GM18951 (cell line): ENCODE measurements at regions of chr15 and their contacts with region 1.

Region 1: DNA sequence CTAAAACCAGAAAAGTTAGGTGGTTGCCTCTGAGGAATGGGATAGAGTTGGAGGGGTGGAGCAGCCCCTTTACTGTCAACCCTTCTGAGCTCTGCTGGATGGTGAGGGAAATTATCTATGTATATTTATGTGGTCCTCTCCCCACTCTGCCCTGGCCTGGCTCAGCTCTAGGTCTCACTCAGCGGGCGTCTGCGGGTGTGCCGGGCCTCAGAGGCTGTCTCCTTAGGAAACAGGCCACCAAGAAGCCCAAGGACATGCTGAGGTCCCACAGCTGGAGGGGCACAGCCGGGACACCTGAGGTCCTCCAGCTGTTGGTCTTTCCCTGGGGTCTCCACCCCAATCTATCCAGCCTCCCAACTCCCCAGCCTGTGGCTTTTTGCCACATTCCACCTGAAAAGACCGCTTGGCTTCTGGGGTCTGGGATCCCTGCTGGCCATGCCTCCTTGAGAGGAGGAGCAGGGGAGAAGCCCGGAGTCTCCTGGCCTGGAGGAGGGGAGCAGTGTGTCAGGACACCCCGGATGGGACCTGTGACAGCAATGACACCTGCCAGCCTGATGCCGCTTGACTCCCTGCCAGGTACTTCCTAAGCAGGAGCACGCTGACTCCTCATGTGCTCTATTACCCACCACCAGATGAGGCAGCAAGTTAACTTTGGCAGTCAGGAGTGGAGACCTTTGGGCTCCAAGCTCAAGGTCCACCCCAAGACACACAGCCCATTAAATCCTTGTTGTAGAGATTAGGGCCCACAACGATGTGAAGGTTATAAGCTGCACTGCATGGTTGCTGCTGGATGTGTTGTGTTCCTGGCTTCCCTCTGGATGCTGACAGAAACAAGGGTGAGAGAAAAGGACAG is at the start of gene SLC28A1:
- POLR2A ChIP-seq: no peak

Region 2: DNA sequence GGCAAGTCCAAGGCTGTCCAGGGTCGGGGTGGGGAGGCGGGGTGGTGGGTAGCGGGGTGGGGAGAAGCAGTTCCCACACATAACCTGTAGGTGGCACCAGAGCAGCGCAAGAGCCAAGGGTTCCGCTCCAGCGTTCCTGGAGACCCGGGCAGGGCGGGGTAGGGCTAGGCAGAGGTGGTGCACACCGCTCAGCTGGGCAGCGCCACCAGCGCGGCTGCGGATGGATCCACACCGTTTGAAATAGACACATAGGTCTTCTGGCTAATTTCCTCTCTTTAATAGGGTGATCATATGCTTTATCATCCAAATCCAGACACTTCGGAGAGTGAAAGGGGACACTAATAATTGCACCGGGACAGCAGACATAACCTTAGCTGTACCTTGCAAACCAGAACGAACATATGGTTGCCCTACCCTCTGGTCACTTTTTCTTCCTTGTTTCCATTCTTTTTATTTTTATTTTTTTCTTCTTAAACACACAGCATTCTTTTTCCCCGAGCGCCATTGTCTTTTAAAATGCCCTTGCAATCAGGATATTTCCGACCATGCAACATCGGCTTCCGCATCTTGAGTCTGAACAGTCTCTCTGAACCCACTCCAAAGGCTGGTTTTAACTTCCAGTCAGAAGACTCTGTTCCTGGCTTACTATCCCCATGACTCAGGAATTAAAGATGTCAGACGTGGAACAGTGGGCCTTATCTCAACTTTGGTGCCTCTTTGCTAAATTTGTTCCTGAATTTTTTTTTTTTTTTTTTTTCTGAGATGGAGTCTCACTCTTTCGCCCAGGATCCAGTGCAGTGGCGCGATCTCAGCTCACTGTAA is 295.9 kb before region 1 on chr15:
- in situ Hi-C with region 1: loop called (anchors 25 kb)
- POLR2A ChIP-seq: no peak

Region 3: GRCh38 chr15:84992157-84992944 is 108.2 kb after region 1 on chr15:
- in situ Hi-C with region 1: no loop called
- POLR2A ChIP-seq: no peak